Right cardiac atrium (tissue), 5 donors: ENCODE measurements at regions of chr9 and their contacts with region 1.

Region 1: GRCh38 chr9:38417003-38417945 is 7.0 kb downstream of the IGFBPL1 start:
- DNase-seq: peak in 1 of 3 donors; percentile 43
- ATAC-seq: no peak
- H3K4me3 ChIP-seq: no peak overlapping the region
- H3K27ac ChIP-seq: no peak overlapping the region
- H3K4me1 ChIP-seq: no peaks in the 10 kb centered on the region
- H3K27me3 ChIP-seq: no peaks in the 10 kb centered on the region

Region 2: GRCh38 chr9:38368726-38369125 is 48.5 kb before region 1 on chr9:
- intact Hi-C with region 1: loop called in 1 of 4 experiments (anchors 5 kb)
- DNase-seq: no peak
- ATAC-seq: no peak
- H3K4me3 ChIP-seq: no peak overlapping the region
- H3K27ac ChIP-seq: no peak overlapping the region
- H3K4me1 ChIP-seq: no peaks in the 10 kb centered on the region
- H3K27me3 ChIP-seq: no peaks in the 10 kb centered on the region